HCT116 (cell line): ENCODE measurements at regions of chr7 and their contacts with region 1.

Region 1: GRCh38 chr7:155961241-155962190 is 149.3 kb upstream of the SHH start:
- DNase-seq: peak; percentile 92
- ATAC-seq: peak; percentile 48
- H3K4me3 ChIP-seq: peak overlapping the region; percentile 41 to 55
- H3K27ac ChIP-seq: peak overlapping the region; percentile 95
- H3K4me1 ChIP-seq: peaks cover 66 to 79% of the 10 kb centered on the region in 2 experiments
- H3K27me3 ChIP-seq: no peaks in the 10 kb centered on the region
- CTCF ChIP-seq: no peak
- POLR2A ChIP-seq: no peak
- RAD21 ChIP-seq: no peak

Region 2: DNA sequence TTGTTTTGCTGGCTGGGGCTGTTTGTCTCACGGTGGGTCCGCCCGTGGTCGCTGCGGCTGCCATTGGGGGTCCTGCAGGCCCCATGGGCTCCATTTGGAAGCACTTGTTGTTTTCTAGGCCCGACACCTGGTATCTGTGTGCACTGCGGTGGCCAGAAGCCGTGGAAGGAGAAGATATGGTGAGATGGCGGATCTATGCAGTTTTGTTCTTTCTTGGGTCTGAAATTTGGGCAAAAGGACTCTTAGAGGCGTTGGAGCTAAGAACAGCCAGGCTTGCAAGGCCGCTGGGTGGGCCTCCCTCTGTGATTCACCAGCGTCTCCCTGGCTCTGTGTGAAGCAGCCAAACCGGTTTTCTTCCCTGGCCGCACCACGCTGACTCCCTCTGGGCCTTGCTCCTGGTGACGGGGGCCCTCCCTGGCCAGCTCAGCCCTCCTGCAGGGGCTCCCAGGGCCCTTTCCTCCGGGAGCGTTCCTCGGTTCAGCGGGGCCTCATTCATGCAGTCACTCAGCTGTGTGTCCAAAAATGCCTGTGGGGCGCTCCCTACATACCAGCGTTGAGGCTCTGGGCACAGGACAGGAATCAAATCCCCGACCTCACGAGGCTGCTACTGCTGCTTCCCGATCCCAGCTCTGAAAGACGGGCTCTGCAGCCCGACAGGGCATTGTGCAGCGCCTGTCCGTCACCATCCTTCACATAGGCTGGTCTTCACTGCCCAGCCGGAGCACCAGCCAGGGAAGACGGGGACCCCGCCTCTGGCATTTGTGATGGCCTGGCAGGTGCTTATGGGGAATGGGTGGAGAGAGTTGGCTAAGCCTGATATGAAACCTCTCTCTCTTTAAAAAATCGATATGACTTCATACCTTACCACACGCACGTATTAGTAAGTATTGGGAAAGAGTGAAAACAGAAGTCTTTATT is 39.5 kb before region 1 on chr7:
- CTCF ChIA-PET with region 1: no interaction called
- POLR2A ChIA-PET with region 1: interaction called, 4 read pairs
- RAD21 ChIA-PET with region 1: no interaction called
- intact Hi-C with region 1: loop called (anchors 1 kb)
- DNase-seq: peak; percentile 77
- ATAC-seq: peak; percentile 87
- H3K4me3 ChIP-seq: peak overlapping the region in 1 of 2 experiments; percentile 10; a peak in 2 of 4 replicates
- H3K27ac ChIP-seq: peak overlapping the region; percentile 60
- H3K4me1 ChIP-seq: peaks cover 35 to 46% of the 10 kb centered on the region in 2 experiments
- H3K27me3 ChIP-seq: no peaks in the 10 kb centered on the region
- CTCF ChIP-seq: no peak
- POLR2A ChIP-seq: no peak
- RAD21 ChIP-seq: peak; percentile 42; the same call in 1 of the 2 replicates

Region 3: GRCh38 chr7:156473476-156474240 is 512.1 kb after region 1 on chr7:
- CTCF ChIA-PET with region 1: interaction called, 4 read pairs
- POLR2A ChIA-PET with region 1: no interaction called
- RAD21 ChIA-PET with region 1: no interaction called
- intact Hi-C with region 1: loop called (anchors 2 kb)
- DNase-seq: peak; percentile 27
- ATAC-seq: peak; percentile 90
- H3K4me3 ChIP-seq: no peak overlapping the region
- H3K27ac ChIP-seq: no peak overlapping the region
- H3K4me1 ChIP-seq: peaks cover 0 to 19% of the 10 kb centered on the region in 2 experiments; a peak in 2 of 4 replicates
- H3K27me3 ChIP-seq: no peaks in the 10 kb centered on the region
- CTCF ChIP-seq: peak; percentile 85 to 90 (median 87)
- POLR2A ChIP-seq: no peak
- RAD21 ChIP-seq: peak; percentile 91

Region 4: GRCh38 chr7:156827587-156828203 is 866.2 kb after region 1 on chr7:
- CTCF ChIA-PET with region 1: no interaction called
- POLR2A ChIA-PET with region 1: no interaction called
- RAD21 ChIA-PET with region 1: no interaction called
- intact Hi-C with region 1: loop called (anchors 10 kb)
- DNase-seq: peak; percentile 8
- ATAC-seq: no peak; the same call in 1 of the 2 replicates
- H3K4me3 ChIP-seq: no peak overlapping the region
- H3K27ac ChIP-seq: no peak overlapping the region
- H3K4me1 ChIP-seq: no peaks in the 10 kb centered on the region
- H3K27me3 ChIP-seq: no peaks in the 10 kb centered on the region
- CTCF ChIP-seq: peak; percentile 37 to 52 (median 45); a peak in 5 of 6 replicates
- POLR2A ChIP-seq: no peak
- RAD21 ChIP-seq: peak; percentile 50